A673 (cell line): ENCODE measurements at regions of chr10 and their contacts with region 1.

Region 1: GRCh38 chr10:88932539-88933256 is 19.9 kb downstream of the ACTA2 start:
- DNase-seq: peak; percentile 93
- H3K4me3 ChIP-seq: no peak overlapping the region
- H3K27ac ChIP-seq: no peak overlapping the region
- H3K4me1 ChIP-seq: peaks cover 24% of the 10 kb centered on the region
- H3K27me3 ChIP-seq: no peaks in the 10 kb centered on the region
- CTCF ChIP-seq: peak; percentile 93

Region 2: GRCh38 chr10:88565072-88565471 is 367.6 kb before region 1 on chr10:
- CTCF ChIA-PET with region 1: interaction called, 11 read pairs
- POLR2A ChIA-PET with region 1: no interaction called
- intact Hi-C with region 1: loop called (anchors 2 kb)
- DNase-seq: peak; percentile 64
- H3K4me3 ChIP-seq: no peak overlapping the region
- H3K27ac ChIP-seq: no peak overlapping the region
- H3K4me1 ChIP-seq: no peaks in the 10 kb centered on the region
- H3K27me3 ChIP-seq: no peaks in the 10 kb centered on the region
- CTCF ChIP-seq: peak; percentile 58

Region 3: DNA sequence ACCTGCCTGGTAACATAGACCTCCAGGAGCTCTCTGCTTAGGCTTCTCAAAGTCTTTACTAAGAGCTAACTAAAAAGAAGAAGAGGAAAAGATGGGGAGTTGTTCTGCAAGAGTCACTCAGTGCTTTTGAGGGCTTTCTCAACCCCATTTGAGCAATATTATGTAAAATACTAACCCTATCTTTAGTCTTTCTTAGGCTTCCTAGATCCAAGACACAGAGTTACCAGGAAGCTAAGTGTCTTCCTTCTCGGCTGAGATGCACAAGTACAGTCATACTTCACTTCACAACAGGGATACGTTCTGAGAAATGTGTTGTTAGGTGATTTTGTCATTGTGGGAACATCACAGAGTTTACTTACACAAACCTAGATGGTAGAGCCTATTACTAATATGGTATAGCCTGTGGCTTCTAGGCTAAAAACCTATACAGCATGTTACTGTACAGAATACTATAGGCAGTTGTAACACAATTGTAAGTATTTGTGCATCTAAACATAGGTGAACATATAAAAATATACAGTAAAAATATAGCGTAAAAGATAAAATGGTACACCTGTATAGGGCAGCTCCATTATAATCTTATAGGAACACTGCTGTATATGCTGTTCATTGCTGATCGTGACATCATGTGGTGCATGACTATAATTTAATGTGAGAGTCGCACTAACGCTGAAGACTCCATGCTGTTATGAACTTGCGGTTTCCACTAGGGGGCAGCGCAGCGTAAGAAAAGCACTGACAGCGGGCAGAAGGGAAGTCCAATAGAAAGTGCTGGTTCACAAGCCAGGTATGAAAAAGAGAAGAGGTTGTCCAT is 97.4 kb before region 1 on chr10:
- CTCF ChIA-PET with region 1: interaction called, 74 read pairs
- POLR2A ChIA-PET with region 1: interaction called, 3 read pairs
- intact Hi-C with region 1: loop called (anchors 1 kb)
- DNase-seq: peak; percentile 93
- H3K4me3 ChIP-seq: no peak overlapping the region
- H3K27ac ChIP-seq: no peak overlapping the region
- H3K4me1 ChIP-seq: no peaks in the 10 kb centered on the region
- H3K27me3 ChIP-seq: no peaks in the 10 kb centered on the region
- CTCF ChIP-seq: peak; percentile 95

Region 4: DNA sequence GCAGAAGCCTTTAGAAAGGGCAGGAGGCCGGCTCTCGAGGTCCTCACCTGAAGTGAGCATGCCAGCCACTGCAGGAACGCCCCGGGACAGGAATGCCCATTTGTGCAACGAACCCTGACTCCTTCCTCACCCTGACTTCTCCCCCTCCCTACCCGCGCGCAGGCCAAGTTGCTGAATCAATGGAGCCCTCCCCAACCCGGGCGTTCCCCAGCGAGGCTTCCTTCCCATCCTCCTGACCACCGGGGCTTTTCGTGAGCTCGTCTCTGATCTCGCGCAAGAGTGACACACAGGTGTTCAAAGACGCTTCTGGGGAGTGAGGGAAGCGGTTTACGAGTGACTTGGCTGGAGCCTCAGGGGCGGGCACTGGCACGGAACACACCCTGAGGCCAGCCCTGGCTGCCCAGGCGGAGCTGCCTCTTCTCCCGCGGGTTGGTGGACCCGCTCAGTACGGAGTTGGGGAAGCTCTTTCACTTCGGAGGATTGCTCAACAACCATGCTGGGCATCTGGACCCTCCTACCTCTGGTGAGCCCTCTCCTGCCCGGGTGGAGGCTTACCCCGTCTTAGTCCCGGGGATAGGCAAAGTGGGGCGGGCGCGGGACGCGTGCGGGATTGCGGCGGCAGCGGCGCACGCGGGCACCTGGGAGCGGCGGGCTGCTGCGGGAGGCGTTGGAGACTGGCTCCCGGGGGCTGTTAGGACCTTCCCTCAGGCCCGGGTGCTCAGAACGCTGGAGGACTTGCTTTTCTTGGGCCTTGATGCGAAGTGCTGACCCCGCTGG is 57.9 kb after region 1 on chr10 and contains the start of gene FAS:
- CTCF ChIA-PET with region 1: interaction called, 6 read pairs
- POLR2A ChIA-PET with region 1: no interaction called
- intact Hi-C with region 1: loop called (anchors 1 kb)
- DNase-seq: peak; percentile 66
- H3K4me3 ChIP-seq: peak within 1 kb of the TSS; percentile 89
- H3K27ac ChIP-seq: peak within 1 kb of the TSS; percentile 97
- H3K4me1 ChIP-seq: peaks cover 57% of the 10 kb centered on the region
- H3K27me3 ChIP-seq: no peaks in the 10 kb centered on the region
- CTCF ChIP-seq: no peak
- total RNA-seq, gene FAS: 30.4 and 40.3 TPM in 2 replicates

Region 5: DNA sequence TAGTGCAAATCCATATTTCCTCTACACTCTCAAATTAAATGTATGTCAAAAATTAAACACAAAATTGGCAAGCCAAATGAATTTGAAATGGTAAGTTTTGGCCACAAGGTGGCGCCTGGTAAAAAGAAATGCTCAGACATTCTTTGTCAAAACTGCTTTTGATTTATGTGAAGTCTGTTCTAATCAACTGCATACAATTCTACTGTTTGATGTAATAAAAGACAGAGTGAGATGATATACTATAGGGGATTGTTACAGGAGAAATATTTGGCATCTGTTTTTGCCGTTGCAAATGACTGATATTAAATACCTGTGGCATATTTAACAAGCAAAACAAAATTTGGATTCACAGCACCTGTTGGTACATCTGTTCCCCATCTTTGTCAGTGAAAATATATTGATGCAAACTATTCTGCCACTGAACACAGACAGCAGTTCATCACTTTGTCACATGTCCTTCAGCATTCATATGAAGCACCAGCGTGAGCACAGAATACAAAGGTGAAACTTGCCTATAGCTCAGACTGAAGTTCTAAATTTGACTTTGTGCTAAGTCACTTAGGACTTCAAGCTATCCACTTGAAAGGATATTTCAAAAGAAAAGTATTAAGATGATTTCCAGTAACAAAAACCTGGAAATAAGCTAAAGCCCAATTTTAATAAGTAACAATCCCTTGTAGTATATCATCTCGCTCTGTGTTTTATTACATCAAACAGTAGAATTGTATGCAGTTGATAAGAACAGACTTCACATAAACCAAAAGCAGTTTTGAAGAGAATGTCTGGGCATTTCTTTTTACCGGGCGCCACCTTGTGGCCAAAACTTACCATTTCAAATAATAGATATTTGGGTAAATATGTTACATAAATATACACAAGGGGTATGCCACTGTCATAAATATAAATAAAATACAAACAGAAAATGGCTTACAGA is 284.6 kb after region 1 on chr10:
- CTCF ChIA-PET with region 1: interaction called, 5 read pairs
- POLR2A ChIA-PET with region 1: no interaction called
- intact Hi-C with region 1: loop called (anchors 1 kb)
- DNase-seq: peak; percentile 80
- H3K4me3 ChIP-seq: no peak overlapping the region
- H3K27ac ChIP-seq: no peak overlapping the region
- H3K4me1 ChIP-seq: peaks cover 6% of the 10 kb centered on the region
- H3K27me3 ChIP-seq: no peaks in the 10 kb centered on the region
- CTCF ChIP-seq: peak; percentile 80

Region 6: DNA sequence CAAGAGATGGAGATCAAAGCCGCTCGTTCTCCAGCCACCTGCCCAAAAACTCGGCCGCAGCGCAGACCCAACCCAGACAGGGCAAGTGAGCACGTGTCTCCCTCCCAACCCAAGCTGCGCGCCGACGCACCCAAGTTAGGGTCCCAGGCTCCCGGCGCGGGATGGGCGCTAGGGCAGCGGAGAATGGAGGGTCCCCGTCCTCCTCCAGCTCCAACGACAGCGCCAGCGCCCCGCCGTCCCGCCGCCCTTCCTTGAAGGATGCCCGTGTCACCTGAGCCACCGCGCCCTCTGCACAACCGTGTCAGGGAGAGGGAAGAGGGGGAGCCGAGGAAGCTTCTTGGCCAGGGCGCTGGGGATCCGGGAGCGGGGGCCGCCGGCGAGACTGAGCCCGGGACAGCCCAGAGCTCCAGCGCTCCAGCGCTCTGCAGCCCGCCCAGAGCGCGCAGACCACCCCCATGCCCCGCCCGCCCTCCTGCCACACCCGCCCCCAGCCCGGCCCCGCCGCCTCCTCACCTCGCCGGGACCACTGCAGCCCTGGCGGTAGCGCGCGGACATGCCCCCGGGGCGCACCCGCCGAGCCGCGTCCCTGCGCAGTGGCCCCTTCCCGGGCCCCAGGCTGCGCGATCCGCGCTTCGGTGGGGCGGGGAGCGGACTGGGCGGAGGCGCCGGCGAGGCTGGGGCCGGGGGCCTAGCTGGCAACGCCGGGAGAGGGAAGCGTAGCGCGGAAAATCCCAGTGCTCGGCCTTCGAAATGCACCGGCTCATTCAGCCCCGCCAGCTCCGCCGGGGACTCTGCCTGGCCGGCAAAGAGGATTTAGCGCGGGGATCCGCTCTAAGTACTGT is 602.7 kb after region 1 on chr10 and contains the start of gene SLC16A12:
- CTCF ChIA-PET with region 1: no interaction called
- POLR2A ChIA-PET with region 1: no interaction called
- intact Hi-C with region 1: no loop called
- DNase-seq: peak; percentile 36
- H3K4me3 ChIP-seq: peak within 1 kb of the TSS; percentile 48
- H3K27ac ChIP-seq: no peak within 1 kb of the TSS
- H3K4me1 ChIP-seq: peaks cover 5% of the 10 kb centered on the region
- H3K27me3 ChIP-seq: no peaks in the 10 kb centered on the region
- CTCF ChIP-seq: no peak
- total RNA-seq, gene SLC16A12: 0.54 and 0.74 TPM in 2 replicates